Activated CD8-positive, alpha-beta memory T cell treated with anti-CD3 and anti-CD28 coated beads, Interleukin-2, amount 10 ng/mL, durations not matched to agents 7 days and 5 days (primary cell): ENCODE measurements at regions of chr6 and their contacts with region 1.

Region 1: DNA sequence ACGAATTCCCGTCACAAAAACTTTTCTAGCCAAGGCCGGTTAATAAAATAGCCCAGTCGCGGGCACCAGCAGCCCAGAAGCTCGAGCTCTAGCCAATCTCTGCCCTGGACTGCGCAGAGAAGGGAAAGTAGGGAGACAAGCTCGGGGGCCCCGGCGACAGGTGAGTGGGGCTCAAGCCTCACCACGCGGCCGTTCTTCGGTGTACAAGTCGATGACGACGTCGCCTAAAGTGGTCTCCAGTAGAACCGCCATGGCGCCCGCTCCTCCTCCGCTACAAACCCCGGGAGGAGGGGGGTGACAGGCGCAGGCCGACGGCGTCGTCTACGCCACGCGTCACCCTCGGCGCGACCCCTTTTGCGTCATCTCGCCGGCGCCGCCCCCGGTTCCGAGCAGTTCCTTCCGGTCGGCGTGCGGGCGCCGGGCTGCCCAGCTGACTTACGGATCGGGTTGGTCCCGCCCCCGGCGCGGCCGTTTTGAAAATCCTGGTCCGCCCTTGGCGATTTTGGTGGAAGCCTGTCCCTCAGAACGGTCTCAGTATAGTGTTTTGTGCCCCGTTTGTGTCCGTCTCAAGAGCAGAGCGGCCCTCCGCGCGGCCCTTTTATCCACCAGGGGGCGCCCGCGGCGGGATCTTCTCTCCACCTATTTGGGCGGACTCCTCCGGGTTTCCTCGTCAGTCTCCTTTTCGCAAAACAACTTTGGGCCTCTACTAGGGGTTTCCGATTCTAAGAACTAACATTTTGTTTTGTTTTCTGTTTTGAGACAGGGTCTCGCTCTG is at the start of gene PPIL4:
- DNase-seq: peak; percentile 97
- ATAC-seq: peak; percentile 86
- H3K4me3 Mint-ChIP-seq: peak within 1 kb of the TSS; percentile 99
- H3K27ac Mint-ChIP-seq: peak within 1 kb of the TSS; percentile 99
- H3K4me1 Mint-ChIP-seq: peaks cover 37% of the 10 kb centered on the region
- H3K27me3 Mint-ChIP-seq: no peaks in the 10 kb centered on the region
- total RNA-seq, gene PPIL4: 17.8 to 18.7 TPM

Region 2: GRCh38 chr6:149565527-149566409 is 19.8 kb after region 1 on chr6 and contains the start of gene GINM1:
- CTCF ChIA-PET with region 1: interaction called, 90 read pairs
- DNase-seq: peak; percentile 96
- ATAC-seq: peak; percentile 92
- H3K4me3 Mint-ChIP-seq: peak within 1 kb of the TSS; percentile 92
- H3K27ac Mint-ChIP-seq: peak within 1 kb of the TSS; percentile 85
- H3K4me1 Mint-ChIP-seq: peaks cover 17% of the 10 kb centered on the region
- H3K27me3 Mint-ChIP-seq: peaks cover 6% of the 10 kb centered on the region
- total RNA-seq, gene GINM1: 16.4 to 16.5 TPM

Region 3: GRCh38 chr6:149600508-149600907 is 54.6 kb after region 1 on chr6:
- CTCF ChIA-PET with region 1: no interaction called
- DNase-seq: no peak
- ATAC-seq: no peak
- H3K4me3 Mint-ChIP-seq: no peak overlapping the region
- H3K27ac Mint-ChIP-seq: no peak overlapping the region
- H3K4me1 Mint-ChIP-seq: no peaks in the 10 kb centered on the region
- H3K27me3 Mint-ChIP-seq: no peaks in the 10 kb centered on the region

Region 4: DNA sequence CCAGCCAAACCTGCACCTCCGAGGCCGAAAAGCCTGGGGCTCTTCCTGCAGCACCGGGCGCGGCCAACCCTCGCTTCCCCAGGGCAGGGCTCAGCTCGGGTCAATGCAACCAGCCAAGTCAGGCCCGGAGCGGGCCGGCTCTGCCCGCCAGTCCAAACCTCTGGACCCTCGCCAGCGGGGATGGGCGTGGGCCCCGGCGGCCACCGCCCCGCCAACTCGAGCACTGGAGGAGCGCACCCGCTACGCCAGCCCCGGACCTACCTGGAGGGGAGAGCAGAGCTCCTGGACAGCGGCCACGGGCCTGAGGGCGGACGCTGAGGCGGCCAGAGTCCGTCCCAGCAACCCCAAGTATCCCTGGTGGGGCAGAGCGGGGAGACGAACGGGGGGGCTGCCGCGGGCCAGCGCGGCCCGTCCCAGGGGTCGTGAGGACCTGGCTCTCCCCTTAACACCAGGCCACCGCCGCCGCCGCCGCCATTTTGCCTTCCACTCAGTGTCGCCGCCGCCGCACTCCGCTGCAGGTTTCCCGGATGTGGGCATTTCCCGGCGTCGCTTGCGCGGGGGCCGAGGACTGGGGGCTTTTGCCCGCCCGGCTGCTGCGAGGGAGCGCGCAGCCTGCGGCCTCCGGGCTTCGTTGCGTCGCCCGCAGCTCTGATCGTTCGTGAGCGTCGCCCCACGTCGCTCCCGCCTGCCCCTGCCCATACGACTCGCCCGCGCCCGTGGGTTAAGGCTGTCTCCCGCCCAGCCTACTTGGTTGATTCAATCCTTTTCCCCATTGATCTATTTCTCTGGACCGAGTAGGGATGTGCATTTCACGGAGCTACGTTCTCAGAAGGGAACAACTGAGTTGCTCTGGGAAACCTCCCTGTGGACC is 171.9 kb after region 1 on chr6 and contains the start of gene LATS1:
- CTCF ChIA-PET with region 1: interaction called, 10 read pairs
- DNase-seq: peak; percentile 96
- ATAC-seq: peak; percentile 91
- H3K4me3 Mint-ChIP-seq: peak within 1 kb of the TSS; percentile 92
- H3K27ac Mint-ChIP-seq: peak within 1 kb of the TSS; percentile 97
- H3K4me1 Mint-ChIP-seq: peaks cover 34% of the 10 kb centered on the region
- H3K27me3 Mint-ChIP-seq: no peaks in the 10 kb centered on the region
- total RNA-seq, gene LATS1: 28.5 to 33.1 TPM

Region 5: GRCh38 chr6:149727793-149728498 is 182.0 kb after region 1 on chr6:
- CTCF ChIA-PET with region 1: no interaction called
- DNase-seq: no peak
- ATAC-seq: peak; percentile 38
- H3K4me3 Mint-ChIP-seq: peak overlapping the region; percentile 6
- H3K27ac Mint-ChIP-seq: peak overlapping the region; percentile 76
- H3K4me1 Mint-ChIP-seq: peaks cover 18% of the 10 kb centered on the region
- H3K27me3 Mint-ChIP-seq: no peaks in the 10 kb centered on the region